Naive thymus-derived CD4-positive, alpha-beta T cell (primary cell): ENCODE measurements at regions of chr12 and their contacts with region 1.

Region 1: DNA sequence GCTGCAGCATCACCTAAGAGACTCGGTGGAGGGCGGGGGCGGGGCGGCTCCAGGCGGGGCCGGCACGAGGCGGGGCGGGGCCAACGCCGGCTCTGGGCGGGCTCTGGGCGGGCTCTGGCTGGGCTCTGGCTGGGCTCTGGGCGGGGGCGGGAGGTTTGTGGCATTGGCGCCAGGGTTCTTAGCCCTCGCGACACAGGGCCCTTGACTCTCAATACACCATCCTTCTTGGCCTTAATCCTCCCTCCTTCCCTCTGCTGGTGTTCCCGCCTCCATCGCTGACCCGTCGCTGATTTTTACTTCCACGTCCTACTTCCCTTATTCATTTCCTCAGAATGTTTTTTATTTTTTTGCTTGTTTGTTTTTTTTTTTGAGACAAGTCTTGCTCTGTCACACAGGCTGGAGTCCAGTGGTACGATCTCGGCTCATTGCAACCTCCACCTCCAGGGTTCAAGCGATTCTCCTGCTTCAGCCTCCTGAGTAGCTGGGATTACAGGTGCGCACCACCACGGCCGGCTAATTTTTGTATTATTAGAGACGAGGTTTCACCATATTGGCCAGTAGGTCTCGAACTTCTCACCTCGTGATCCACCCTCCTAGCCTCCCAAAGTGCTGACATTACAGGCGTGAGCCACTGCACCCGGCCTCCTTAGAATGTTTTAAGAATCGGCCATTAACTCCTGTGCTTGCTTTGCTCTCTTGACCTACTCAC is at the start of gene BLTP3B:
- DNase-seq: peak; percentile 70 to 91 (median 84)
- ATAC-seq: peak; percentile 98
- H3K4me3 ChIP-seq: peak within 1 kb of the TSS; percentile 84
- H3K4me3 Mint-ChIP-seq: peak within 1 kb of the TSS; percentile 86 to 97 (median 95)
- H3K27ac ChIP-seq: peak within 1 kb of the TSS; percentile 93
- H3K27ac Mint-ChIP-seq: peak within 1 kb of the TSS; percentile 85 to 98 (median 94)
- H3K4me1 ChIP-seq: peaks cover 7 to 14% of the 10 kb centered on the region in 2 donors
- H3K4me1 Mint-ChIP-seq: peaks cover 31 to 46% (median 33%) of the 10 kb centered on the region in 7 donors
- H3K27me3 ChIP-seq: no peaks in the 10 kb centered on the region
- H3K27me3 Mint-ChIP-seq: no peaks in the 10 kb centered on the region
- total RNA-seq, gene BLTP3B: 13.1 to 28.9 (median 18.0) TPM

Region 2: GRCh38 chr12:98516184-98516873 is 1626.7 kb before region 1 on chr12:
- CTCF ChIA-PET with region 1: no interaction called
- POLR2A ChIA-PET with region 1: no interaction called
- intact Hi-C with region 1: loop called in 1 of 2 experiments (anchors 2 kb)
- DNase-seq: peak; percentile 53 to 90 (median 83)
- ATAC-seq: peak; percentile 79
- H3K4me3 ChIP-seq: peak overlapping the region; percentile 92
- H3K4me3 Mint-ChIP-seq: peak overlapping the region; percentile 95 to 100 (median 99)
- H3K27ac ChIP-seq: peak overlapping the region; percentile 95
- H3K27ac Mint-ChIP-seq: peak overlapping the region; percentile 91 to 99 (median 99)
- H3K4me1 ChIP-seq: peaks cover 10 to 26% of the 10 kb centered on the region in 2 donors
- H3K4me1 Mint-ChIP-seq: peaks cover 33 to 69% (median 52%) of the 10 kb centered on the region in 7 donors
- H3K27me3 ChIP-seq: no peaks in the 10 kb centered on the region
- H3K27me3 Mint-ChIP-seq: peaks cover 0 to 1% (median 0%) of the 10 kb centered on the region in 5 donors

Region 3: GRCh38 chr12:99043319-99043914 is 1099.6 kb before region 1 on chr12:
- CTCF ChIA-PET with region 1: no interaction called
- POLR2A ChIA-PET with region 1: no interaction called
- intact Hi-C with region 1: loop called in 1 of 2 experiments (anchors 5 kb)
- DNase-seq: peak in 5 of 9 donors; percentile 1 to 37 (median 16)
- ATAC-seq: peak; percentile 51
- H3K4me3 ChIP-seq: no peak overlapping the region
- H3K4me3 Mint-ChIP-seq: no peak overlapping the region
- H3K27ac ChIP-seq: no peak overlapping the region
- H3K27ac Mint-ChIP-seq: no peak overlapping the region
- H3K4me1 ChIP-seq: no peaks in the 10 kb centered on the region
- H3K4me1 Mint-ChIP-seq: no peaks in the 10 kb centered on the region
- H3K27me3 ChIP-seq: no peaks in the 10 kb centered on the region
- H3K27me3 Mint-ChIP-seq: peaks cover 0 to 21% (median 6%) of the 10 kb centered on the region in 5 donors

Region 4: DNA sequence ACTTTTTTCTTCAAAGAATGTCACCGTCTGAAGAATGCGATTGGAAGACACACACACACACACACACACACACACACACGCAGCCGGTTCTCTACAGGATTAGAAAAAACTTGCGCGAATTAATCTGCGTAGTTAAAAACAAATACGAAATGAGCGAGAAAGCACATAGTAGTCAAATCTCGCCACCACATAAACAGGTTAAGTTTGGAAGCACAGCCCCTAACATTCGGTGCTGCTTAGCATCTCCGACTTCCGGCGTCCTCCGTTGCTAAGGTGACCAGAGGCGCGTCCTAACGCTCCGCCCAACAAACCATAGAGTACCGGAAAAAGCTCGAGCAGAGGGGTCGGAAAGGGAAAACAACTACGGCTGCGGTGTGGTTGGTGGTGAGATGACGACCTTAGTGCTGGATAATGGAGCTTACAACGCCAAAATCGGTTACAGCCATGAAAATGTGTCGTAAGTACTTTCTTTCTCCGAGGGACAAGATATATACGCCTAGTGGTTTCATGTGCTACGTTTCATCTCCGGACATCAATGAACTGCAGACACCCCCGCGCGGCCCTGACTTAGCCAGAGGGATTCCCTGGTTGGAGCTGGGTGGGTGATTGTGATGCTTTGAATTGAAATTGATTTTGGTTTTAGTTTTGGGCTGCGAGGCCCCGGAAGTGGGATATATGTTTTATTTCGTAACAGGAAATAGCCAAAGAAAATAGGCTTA is 57.6 kb after region 1 on chr12 and contains the start of gene ACTR6:
- CTCF ChIA-PET with region 1: interaction called, 3 read pairs
- POLR2A ChIA-PET with region 1: no interaction called
- intact Hi-C with region 1: loop called (anchors 1 kb)
- DNase-seq: peak; percentile 91 to 99 (median 97)
- ATAC-seq: peak; percentile 93
- H3K4me3 ChIP-seq: peak within 1 kb of the TSS; percentile 84
- H3K4me3 Mint-ChIP-seq: peak within 1 kb of the TSS; percentile 95 to 99 (median 98)
- H3K27ac ChIP-seq: peak within 1 kb of the TSS; percentile 95
- H3K27ac Mint-ChIP-seq: peak within 1 kb of the TSS; percentile 98 to 100 (median 99)
- H3K4me1 ChIP-seq: peaks cover 10 to 27% of the 10 kb centered on the region in 2 donors
- H3K4me1 Mint-ChIP-seq: peaks cover 17 to 56% (median 44%) of the 10 kb centered on the region in 7 donors
- H3K27me3 ChIP-seq: no peaks in the 10 kb centered on the region
- H3K27me3 Mint-ChIP-seq: no peaks in the 10 kb centered on the region
- total RNA-seq, gene ACTR6: 24.1 to 46.8 (median 34.6) TPM

Region 5: GRCh38 chr12:100573292-100574186 is 430.5 kb after region 1 on chr12 and contains the start of gene GAS2L3:
- CTCF ChIA-PET with region 1: no interaction called
- POLR2A ChIA-PET with region 1: no interaction called
- intact Hi-C with region 1: loop called in 1 of 2 experiments (anchors 2 kb)
- DNase-seq: peak in 8 of 9 donors; percentile 5 to 80 (median 22)
- ATAC-seq: peak; percentile 91
- H3K4me3 ChIP-seq: peak within 1 kb of the TSS; percentile 65
- H3K4me3 Mint-ChIP-seq: peak within 1 kb of the TSS; percentile 80 to 93 (median 90)
- H3K27ac ChIP-seq: no peak within 1 kb of the TSS
- H3K27ac Mint-ChIP-seq: peak within 1 kb of the TSS in 1 of 9 donors; percentile 87
- H3K4me1 ChIP-seq: peaks cover 0 to 4% of the 10 kb centered on the region in 2 donors
- H3K4me1 Mint-ChIP-seq: peaks cover 7 to 15% (median 11%) of the 10 kb centered on the region in 7 donors
- H3K27me3 ChIP-seq: no peaks in the 10 kb centered on the region
- H3K27me3 Mint-ChIP-seq: peaks cover 15 to 44% (median 30%) of the 10 kb centered on the region in 5 donors
- total RNA-seq, gene GAS2L3: 0.08 to 4.9 (median 0.16) TPM

Region 6: GRCh38 chr12:101830367-101831325 is 1687.6 kb after region 1 on chr12 and contains the start of gene GNPTAB:
- CTCF ChIA-PET with region 1: no interaction called
- POLR2A ChIA-PET with region 1: no interaction called
- intact Hi-C with region 1: loop called (anchors 2 to 5 kb)
- DNase-seq: peak; percentile 92 to 98 (median 95)
- ATAC-seq: peak; percentile 98
- H3K4me3 ChIP-seq: peak within 1 kb of the TSS; percentile 89
- H3K4me3 Mint-ChIP-seq: peak within 1 kb of the TSS; percentile 88 to 99 (median 98)
- H3K27ac ChIP-seq: peak within 1 kb of the TSS; percentile 77
- H3K27ac Mint-ChIP-seq: peak within 1 kb of the TSS; percentile 76 to 98 (median 93)
- H3K4me1 ChIP-seq: peaks cover 10 to 19% of the 10 kb centered on the region in 2 donors
- H3K4me1 Mint-ChIP-seq: peaks cover 22 to 52% (median 47%) of the 10 kb centered on the region in 7 donors
- H3K27me3 ChIP-seq: no peaks in the 10 kb centered on the region
- H3K27me3 Mint-ChIP-seq: no peaks in the 10 kb centered on the region
- total RNA-seq, gene GNPTAB: 42.0 to 85.1 (median 62.2) TPM